K562 (cell line): ENCODE measurements at regions of chr4 and their contacts with region 1.

Region 1: DNA sequence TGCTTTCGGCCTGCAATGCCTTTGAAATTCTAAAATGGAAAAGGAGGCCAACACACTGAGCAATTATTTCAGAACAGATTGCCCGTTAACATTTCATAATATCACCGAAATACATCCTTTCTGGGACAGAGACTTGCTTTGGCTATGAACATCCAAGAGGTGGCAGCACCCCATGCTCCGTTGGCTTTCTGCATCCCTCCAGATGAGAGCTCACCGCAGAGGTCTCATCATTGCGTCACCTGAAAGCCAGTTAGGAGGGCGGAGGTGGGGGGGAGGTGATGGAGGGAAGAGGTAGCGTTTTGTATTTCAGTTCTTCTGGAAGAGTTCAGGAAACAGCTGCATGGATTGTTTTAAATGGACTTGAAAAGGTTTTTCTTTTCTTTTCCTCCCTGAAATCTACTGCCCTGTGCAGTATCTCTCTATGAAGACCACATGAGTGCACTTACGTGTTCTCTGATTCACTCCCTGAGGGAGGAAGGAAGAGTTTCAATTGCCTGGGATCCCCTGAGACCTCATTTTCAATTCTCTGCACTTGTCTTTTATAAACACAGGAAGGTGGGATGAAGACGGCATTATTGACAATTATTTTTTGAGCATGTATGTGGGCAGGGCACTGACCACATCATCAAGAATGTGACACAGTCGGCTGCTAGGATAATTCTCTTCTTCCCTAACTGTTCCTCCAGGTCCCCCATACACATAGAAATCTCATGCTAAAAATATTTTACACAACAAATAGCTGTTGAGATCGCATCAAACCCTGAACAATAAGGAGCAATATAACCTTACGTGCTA is 166.9 kb upstream of the PGRMC2 start:
- DNase-seq: peak; percentile 74 to 88 (median 83)
- ATAC-seq: peak; percentile 98
- H3K4me3 ChIP-seq: no peak overlapping the region
- H3K27ac ChIP-seq: no peak overlapping the region
- H3K4me1 ChIP-seq: peaks cover 0 to 7% of the 10 kb centered on the region in 2 experiments; a peak in 3 of 5 replicates
- H3K27me3 ChIP-seq: no peaks in the 10 kb centered on the region
- CTCF ChIP-seq: peak; percentile 79 to 91 (median 91)
- EP300 ChIP-seq: peak; percentile 55
- POLR2A ChIP-seq: no peak
- RAD21 ChIP-seq: peak; percentile 92

Region 2: DNA sequence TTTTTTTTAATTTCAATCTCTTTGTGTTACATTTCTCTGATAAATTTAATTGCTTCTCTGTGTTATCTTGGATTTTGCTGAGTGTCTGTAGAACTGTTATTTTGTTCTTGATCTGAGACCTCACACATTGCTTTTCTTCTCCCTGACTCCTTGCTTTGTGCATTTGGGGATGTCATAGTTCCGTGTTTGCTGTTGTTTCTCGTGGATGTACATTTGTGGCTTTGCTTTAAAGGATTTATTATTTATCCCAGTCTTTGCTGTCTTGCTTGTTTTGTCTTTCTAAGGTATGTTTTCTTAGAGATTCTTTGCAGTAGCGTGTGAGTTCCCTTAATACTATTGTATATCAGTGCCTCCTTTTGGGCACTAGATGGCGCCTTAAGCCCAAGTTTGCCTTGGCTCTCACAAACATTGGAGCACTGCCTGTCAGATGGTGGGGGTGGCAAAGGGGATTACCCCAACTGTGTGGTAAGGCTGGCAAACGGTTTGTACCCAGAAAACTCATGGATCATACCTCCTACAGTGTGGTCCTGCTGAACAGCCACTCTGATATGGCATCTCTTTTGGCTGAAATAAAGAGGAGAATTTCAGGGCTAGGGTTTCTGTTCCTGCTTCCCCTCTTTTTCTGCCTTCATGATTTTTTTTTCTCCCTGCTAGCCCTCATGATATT is 263.2 kb before region 1 on chr4:
- CTCF ChIA-PET with region 1: interaction called, 3 read pairs
- POLR2A ChIA-PET with region 1: no interaction called
- in situ Hi-C with region 1: no loop called
- intact Hi-C with region 1: loop called (anchors 1 kb)
- DNase-seq: peak; percentile 65 to 77 (median 66)
- ATAC-seq: peak; percentile 99
- H3K4me3 ChIP-seq: no peak overlapping the region
- H3K27ac ChIP-seq: no peak overlapping the region
- H3K4me1 ChIP-seq: no peaks in the 10 kb centered on the region
- H3K27me3 ChIP-seq: no peaks in the 10 kb centered on the region
- CTCF ChIP-seq: peak; percentile 75 to 92 (median 87)
- EP300 ChIP-seq: no peak
- POLR2A ChIP-seq: no peak
- RAD21 ChIP-seq: peak; percentile 86 to 88

Region 3: DNA sequence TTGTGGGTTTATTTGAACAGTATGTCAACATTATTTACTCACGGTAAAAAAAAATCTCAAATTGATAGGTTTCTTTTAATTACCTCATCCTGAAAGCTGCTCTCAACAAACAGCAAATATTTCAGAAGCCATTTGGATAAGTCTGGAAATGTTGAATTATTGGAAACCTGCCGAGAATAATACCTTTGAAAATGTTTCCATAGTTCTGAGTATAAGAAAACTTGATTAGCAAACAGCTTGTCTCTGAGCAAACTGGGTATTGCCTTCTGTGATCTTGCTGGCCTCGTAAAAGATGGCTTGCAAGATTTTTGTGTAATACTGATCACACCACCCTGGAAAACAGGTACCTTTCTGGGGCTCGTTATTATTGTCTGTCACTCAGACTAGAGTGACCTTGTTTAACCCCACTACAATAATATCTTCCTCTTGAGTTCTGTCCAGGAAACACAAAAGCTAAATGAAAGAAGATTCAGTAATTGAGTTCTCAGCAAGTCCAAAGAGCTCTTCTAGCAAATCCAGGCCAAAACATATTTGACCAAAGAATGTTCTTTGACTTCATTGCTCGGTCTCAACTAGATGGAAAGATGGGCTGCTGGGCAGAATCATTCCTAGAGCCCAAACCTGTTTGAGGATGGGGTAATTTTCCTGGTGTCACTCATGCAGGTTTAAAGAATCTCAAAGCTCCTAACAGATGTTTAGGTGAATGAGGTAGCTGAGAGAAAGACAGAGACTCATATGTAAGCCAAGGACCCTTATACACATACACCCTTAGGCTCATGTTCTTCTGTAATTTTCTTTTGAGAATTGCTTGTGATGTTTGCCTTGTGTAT is 99.4 kb after region 1 on chr4:
- CTCF ChIA-PET with region 1: no interaction called
- POLR2A ChIA-PET with region 1: interaction called, 10 read pairs
- in situ Hi-C with region 1: no loop called
- intact Hi-C with region 1: loop called (anchors 1 kb)
- DNase-seq: no peak
- ATAC-seq: peak; percentile 18; the same call in 2 of the 3 replicates
- H3K4me3 ChIP-seq: peak overlapping the region; percentile 39; the same call in 1 of the 2 replicates
- H3K27ac ChIP-seq: peak overlapping the region; percentile 85; the same call in 2 of the 3 replicates
- H3K4me1 ChIP-seq: peaks cover 6 to 12% of the 10 kb centered on the region in 2 experiments; a peak in 3 of 5 replicates
- H3K27me3 ChIP-seq: no peaks in the 10 kb centered on the region
- CTCF ChIP-seq: no peak
- EP300 ChIP-seq: no peak
- POLR2A ChIP-seq: no peak
- RAD21 ChIP-seq: no peak

Region 4: GRCh38 chr4:128574706-128575105 is 120.2 kb after region 1 on chr4:
- CTCF ChIA-PET with region 1: no interaction called
- POLR2A ChIA-PET with region 1: no interaction called
- in situ Hi-C with region 1: no loop called
- intact Hi-C with region 1: loop called (anchors 1 kb)
- DNase-seq: peak; percentile 79 to 89 (median 80)
- ATAC-seq: peak; percentile 96
- H3K4me3 ChIP-seq: no peak overlapping the region
- H3K27ac ChIP-seq: no peak overlapping the region
- H3K4me1 ChIP-seq: peaks cover 6 to 8% of the 10 kb centered on the region in 2 experiments; a peak in 3 of 5 replicates
- H3K27me3 ChIP-seq: no peaks in the 10 kb centered on the region
- CTCF ChIP-seq: peak; percentile 75 to 90 (median 85)
- EP300 ChIP-seq: peak; percentile 11; the same call in 1 of the 2 replicates
- POLR2A ChIP-seq: no peak
- RAD21 ChIP-seq: peak; percentile 84

Region 5: DNA sequence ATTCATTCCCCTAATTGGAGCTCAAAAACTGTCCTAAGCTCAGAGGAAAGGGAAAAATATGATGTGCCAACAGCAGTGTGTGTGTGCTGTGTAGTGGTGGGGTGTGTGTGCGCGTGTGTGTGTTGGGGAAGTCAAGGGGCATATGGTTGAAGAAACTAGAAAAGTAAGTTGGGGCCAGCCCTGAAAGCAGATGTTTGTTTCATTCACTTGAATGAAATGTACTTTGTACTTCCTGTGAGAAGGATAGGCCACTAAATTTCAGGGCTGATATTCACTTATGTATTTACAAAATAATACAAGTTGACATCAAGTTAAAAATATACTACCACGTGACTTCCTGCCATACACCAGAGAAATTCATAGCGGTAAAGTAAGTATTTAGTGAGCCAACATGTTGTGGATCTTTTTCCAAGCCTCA is 203.7 kb after region 1 on chr4:
- CTCF ChIA-PET with region 1: no interaction called
- POLR2A ChIA-PET with region 1: no interaction called
- in situ Hi-C with region 1: no loop called
- intact Hi-C with region 1: loop called (anchors 5 kb)
- DNase-seq: no peak
- ATAC-seq: no peak
- H3K4me3 ChIP-seq: no peak overlapping the region
- H3K27ac ChIP-seq: 0 out of 3 replicates have a peak overlapping the region, but pooled peaks have one; percentile 29
- H3K4me1 ChIP-seq: peaks cover 0 to 7% of the 10 kb centered on the region in 2 experiments; a peak in 2 of 5 replicates
- H3K27me3 ChIP-seq: no peaks in the 10 kb centered on the region; a peak in 1 of 5 replicates
- CTCF ChIP-seq: no peak
- EP300 ChIP-seq: no peak
- POLR2A ChIP-seq: no peak
- RAD21 ChIP-seq: no peak